Activated CD4-positive, alpha-beta T cell treated with anti-CD3 and anti-CD28 coated beads for 36 hours (primary cell): ENCODE measurements at regions of chr4 and their contacts with region 1.

Region 1: GRCh38 chr4:77959566-77960338 is 97.1 kb downstream of the MRPL1 start:
- DNase-seq: no peak
- ATAC-seq: no peak
- H3K4me3 Mint-ChIP-seq: no peak overlapping the region
- H3K27ac Mint-ChIP-seq: no peak overlapping the region
- H3K4me1 Mint-ChIP-seq: peaks cover 12% of the 10 kb centered on the region
- H3K27me3 Mint-ChIP-seq: no peaks in the 10 kb centered on the region

Region 2: DNA sequence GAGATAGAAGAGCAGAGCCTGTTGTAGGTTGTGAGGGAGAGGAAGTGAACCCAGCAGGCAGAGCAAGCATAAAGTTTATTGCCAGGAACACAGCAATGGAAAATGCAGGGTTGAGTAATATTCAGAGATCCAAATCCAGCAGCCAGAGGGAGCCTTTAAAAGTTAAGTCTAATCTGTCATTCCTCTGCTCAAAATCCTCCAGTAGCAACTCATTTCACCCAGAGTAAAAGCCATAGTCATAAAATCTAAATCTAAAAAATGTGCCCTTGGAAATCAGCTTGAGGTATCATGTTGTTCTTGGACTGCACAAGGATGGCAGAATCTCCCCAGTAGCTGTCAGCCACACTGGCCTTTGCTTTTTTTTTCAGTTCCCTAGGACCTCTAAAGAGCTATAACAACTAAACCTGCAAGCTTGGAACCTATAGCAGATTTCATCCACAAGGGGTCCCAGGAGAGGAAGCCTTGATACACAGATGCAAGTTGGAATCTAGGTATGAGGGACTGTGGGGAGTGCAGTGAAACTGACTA is 34.5 kb after region 1 on chr4:
- CTCF ChIA-PET with region 1: no interaction called
- POLR2A ChIA-PET with region 1: no interaction called
- intact Hi-C with region 1: no loop called
- DNase-seq: peak; percentile 14
- ATAC-seq: peak; percentile 47
- H3K4me3 Mint-ChIP-seq: no peak overlapping the region
- H3K27ac Mint-ChIP-seq: no peak overlapping the region
- H3K4me1 Mint-ChIP-seq: no peaks in the 10 kb centered on the region
- H3K27me3 Mint-ChIP-seq: peaks cover 15% of the 10 kb centered on the region

Region 3: GRCh38 chr4:78056265-78057129 is 96.7 kb after region 1 on chr4:
- CTCF ChIA-PET with region 1: no interaction called
- POLR2A ChIA-PET with region 1: no interaction called
- intact Hi-C with region 1: loop called (anchors 5 kb)
- DNase-seq: peak; percentile 61
- ATAC-seq: peak; percentile 76
- H3K4me3 Mint-ChIP-seq: peak overlapping the region; percentile 72
- H3K27ac Mint-ChIP-seq: no peak overlapping the region
- H3K4me1 Mint-ChIP-seq: peaks cover 24% of the 10 kb centered on the region
- H3K27me3 Mint-ChIP-seq: peaks cover 53% of the 10 kb centered on the region

Region 4: GRCh38 chr4:78268597-78268996 is 308.8 kb after region 1 on chr4:
- CTCF ChIA-PET with region 1: no interaction called
- POLR2A ChIA-PET with region 1: no interaction called
- intact Hi-C with region 1: loop called (anchors 2 to 5 kb)
- DNase-seq: no peak
- ATAC-seq: no peak
- H3K4me3 Mint-ChIP-seq: no peak overlapping the region
- H3K27ac Mint-ChIP-seq: no peak overlapping the region
- H3K4me1 Mint-ChIP-seq: no peaks in the 10 kb centered on the region
- H3K27me3 Mint-ChIP-seq: peaks cover 7% of the 10 kb centered on the region

Region 5: DNA sequence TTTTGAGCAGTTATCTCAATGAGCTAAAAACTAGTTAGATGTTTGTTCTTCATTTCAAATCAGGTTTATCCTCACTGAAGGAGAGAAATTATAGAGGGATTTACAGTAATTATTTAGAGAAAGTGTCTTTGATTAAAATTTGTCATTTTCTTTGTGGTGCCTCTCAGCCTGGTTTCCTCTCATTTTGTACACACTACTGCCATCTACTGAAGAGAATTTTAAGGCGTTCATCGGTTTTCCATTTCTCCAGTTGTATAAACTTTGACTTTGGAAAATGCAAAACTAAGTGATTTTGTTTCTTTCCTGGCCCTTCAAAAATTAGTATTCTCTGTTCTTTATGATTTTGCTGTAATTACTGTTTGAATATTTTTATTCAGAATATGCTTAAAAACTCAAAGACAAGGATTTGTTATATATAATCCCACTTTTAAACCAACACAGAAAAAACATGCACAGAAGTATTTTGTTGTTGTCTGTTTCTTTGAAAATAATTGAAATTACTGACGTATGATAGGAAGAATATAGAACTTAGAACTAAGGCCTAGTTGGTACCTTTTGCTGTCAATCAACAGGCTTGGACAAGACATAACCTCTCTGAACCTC is 557.4 kb after region 1 on chr4:
- CTCF ChIA-PET with region 1: interaction called, 5 read pairs
- POLR2A ChIA-PET with region 1: no interaction called
- intact Hi-C with region 1: loop called (anchors 1 to 2 kb)
- DNase-seq: no peak
- ATAC-seq: no peak
- H3K4me3 Mint-ChIP-seq: no peak overlapping the region
- H3K27ac Mint-ChIP-seq: no peak overlapping the region
- H3K4me1 Mint-ChIP-seq: no peaks in the 10 kb centered on the region
- H3K27me3 Mint-ChIP-seq: peaks cover 2% of the 10 kb centered on the region